ENCODE measurements at regions of chr4 and their contacts with region 1.

Region 1: GRCh38 chr4:37068580-37068979 is 176.0 kb upstream of the NWD2 start:
- DNase-seq: peak in 1 of 2 experiments; percentile 68
- H3K4me3 ChIP-seq: no peak overlapping the region
- H3K27ac ChIP-seq: no peak overlapping the region
- H3K4me1 ChIP-seq: no peaks in the 10 kb centered on the region
- H3K27me3 ChIP-seq: no peaks in the 10 kb centered on the region
- CTCF ChIP-seq: peak; percentile 75 to 86 (median 78)
- EP300 ChIP-seq: no peak
- POLR2A ChIP-seq: no peak
- RAD21 ChIP-seq: peak; percentile 67 to 73

Region 2: GRCh38 chr4:37054531-37055077 is 14.0 kb before region 1 on chr4:
- CTCF ChIA-PET with region 1: interaction called, 21 read pairs
- POLR2A ChIA-PET with region 1: no interaction called
- DNase-seq: peak in 1 of 2 experiments; percentile 46
- H3K4me3 ChIP-seq: no peak overlapping the region
- H3K27ac ChIP-seq: no peak overlapping the region
- H3K4me1 ChIP-seq: peaks cover 0 to 5% (median 2%) of the 10 kb centered on the region in 4 experiments; a peak in 3 of 7 replicates
- H3K27me3 ChIP-seq: no peaks in the 10 kb centered on the region
- CTCF ChIP-seq: no peak
- EP300 ChIP-seq: no peak
- POLR2A ChIP-seq: no peak
- RAD21 ChIP-seq: no peak

Region 3: GRCh38 chr4:37383579-37384229 is 315.1 kb after region 1 on chr4:
- CTCF ChIA-PET with region 1: interaction called, 22 read pairs
- POLR2A ChIA-PET with region 1: no interaction called
- DNase-seq: peak in 1 of 2 experiments; percentile 52
- H3K4me3 ChIP-seq: no peak overlapping the region
- H3K27ac ChIP-seq: no peak overlapping the region
- H3K4me1 ChIP-seq: peaks cover 0 to 3% (median under 1%) of the 10 kb centered on the region in 4 experiments; a peak in 2 of 7 replicates
- H3K27me3 ChIP-seq: no peaks in the 10 kb centered on the region
- CTCF ChIP-seq: peak in 2 of 3 experiments; percentile 65 to 95; a peak in 3 of 4 replicates
- EP300 ChIP-seq: no peak
- POLR2A ChIP-seq: no peak
- RAD21 ChIP-seq: peak; percentile 71 to 80

Region 4: DNA sequence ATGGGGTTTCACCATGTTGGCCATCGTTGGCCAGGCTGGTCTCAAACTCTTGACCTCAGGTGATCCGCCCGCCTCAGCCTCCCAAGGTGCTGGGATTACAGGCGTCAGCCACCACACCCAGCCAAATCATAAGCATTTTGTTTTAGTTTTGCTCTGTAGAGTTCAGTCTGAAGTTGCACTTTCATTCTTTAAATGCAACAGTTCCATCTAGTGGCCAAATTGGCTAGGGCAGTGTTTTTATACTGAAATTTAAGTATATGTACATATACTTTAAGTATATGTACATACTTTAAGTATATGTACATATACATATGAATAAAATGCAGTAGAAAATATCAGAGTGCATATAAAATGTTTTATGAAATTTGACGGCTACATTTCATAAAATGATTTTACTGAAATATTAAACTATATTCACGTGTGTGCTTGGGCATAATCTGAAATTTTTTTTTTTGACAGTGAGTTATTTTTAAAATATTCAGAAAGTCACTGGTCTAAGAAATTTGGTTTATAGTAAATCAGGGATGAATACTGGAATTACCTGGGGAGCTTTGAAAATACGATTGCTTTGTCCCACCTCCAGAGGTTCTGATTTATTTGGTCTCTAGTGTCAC is 321.5 kb after region 1 on chr4:
- CTCF ChIA-PET with region 1: interaction called, 22 read pairs
- POLR2A ChIA-PET with region 1: no interaction called
- DNase-seq: no peak
- H3K4me3 ChIP-seq: no peak overlapping the region
- H3K27ac ChIP-seq: no peak overlapping the region
- H3K4me1 ChIP-seq: peaks cover 0 to 5% (median 3%) of the 10 kb centered on the region in 4 experiments; a peak in 3 of 7 replicates
- H3K27me3 ChIP-seq: no peaks in the 10 kb centered on the region
- CTCF ChIP-seq: peak in 2 of 3 experiments; percentile 47 to 62; a peak in 2 of 4 replicates
- EP300 ChIP-seq: no peak
- POLR2A ChIP-seq: no peak
- RAD21 ChIP-seq: peak; percentile 72 to 76

Region 5: GRCh38 chr4:37463033-37463856 is 394.7 kb after region 1 on chr4:
- CTCF ChIA-PET with region 1: no interaction called
- POLR2A ChIA-PET with region 1: no interaction called
- DNase-seq: no peak
- H3K4me3 ChIP-seq: no peak overlapping the region
- H3K27ac ChIP-seq: no peak overlapping the region
- H3K4me1 ChIP-seq: peaks cover 0 to 3% (median 1%) of the 10 kb centered on the region in 4 experiments; a peak in 4 of 7 replicates
- H3K27me3 ChIP-seq: no peaks in the 10 kb centered on the region
- CTCF ChIP-seq: peak in 2 of 3 experiments; percentile 29 to 33; a peak in 2 of 4 replicates
- EP300 ChIP-seq: no peak
- POLR2A ChIP-seq: no peak
- RAD21 ChIP-seq: peak; percentile 36 to 46